ENCODE measurements at regions of chr1 and their contacts with region 1.

Region 1: GRCh38 chr1:27436204-27437159 is 44.1 kb downstream of the GPR3 start:
- DNase-seq: peak; percentile 66
- H3K4me3 ChIP-seq: peak overlapping the region; percentile 61
- H3K27ac ChIP-seq: peak overlapping the region; percentile 91
- H3K4me1 ChIP-seq: peaks cover 97% of the 10 kb centered on the region
- CTCF ChIP-seq: no peak

Region 2: GRCh38 chr1:27481994-27482620 is 45.6 kb after region 1 on chr1:
- CTCF ChIA-PET with region 1: interaction called, 3 read pairs
- POLR2A ChIA-PET with region 1: interaction called, 10 read pairs
- intact Hi-C with region 1: loop called (anchors 1 kb)
- DNase-seq: no peak
- H3K4me3 ChIP-seq: peak overlapping the region; percentile 45
- H3K27ac ChIP-seq: peak overlapping the region; percentile 94
- H3K4me1 ChIP-seq: peaks cover 84% of the 10 kb centered on the region
- CTCF ChIP-seq: no peak

Region 3: GRCh38 chr1:27519331-27520258 is 83.1 kb after region 1 on chr1:
- CTCF ChIA-PET with region 1: no interaction called
- POLR2A ChIA-PET with region 1: no interaction called
- intact Hi-C with region 1: no loop called
- DNase-seq: no peak
- H3K4me3 ChIP-seq: no peak overlapping the region
- H3K27ac ChIP-seq: no peak overlapping the region
- H3K4me1 ChIP-seq: peaks cover 21% of the 10 kb centered on the region
- CTCF ChIP-seq: no peak